ENCODE measurements at regions of chr12 and their contacts with region 1.

Region 1: DNA sequence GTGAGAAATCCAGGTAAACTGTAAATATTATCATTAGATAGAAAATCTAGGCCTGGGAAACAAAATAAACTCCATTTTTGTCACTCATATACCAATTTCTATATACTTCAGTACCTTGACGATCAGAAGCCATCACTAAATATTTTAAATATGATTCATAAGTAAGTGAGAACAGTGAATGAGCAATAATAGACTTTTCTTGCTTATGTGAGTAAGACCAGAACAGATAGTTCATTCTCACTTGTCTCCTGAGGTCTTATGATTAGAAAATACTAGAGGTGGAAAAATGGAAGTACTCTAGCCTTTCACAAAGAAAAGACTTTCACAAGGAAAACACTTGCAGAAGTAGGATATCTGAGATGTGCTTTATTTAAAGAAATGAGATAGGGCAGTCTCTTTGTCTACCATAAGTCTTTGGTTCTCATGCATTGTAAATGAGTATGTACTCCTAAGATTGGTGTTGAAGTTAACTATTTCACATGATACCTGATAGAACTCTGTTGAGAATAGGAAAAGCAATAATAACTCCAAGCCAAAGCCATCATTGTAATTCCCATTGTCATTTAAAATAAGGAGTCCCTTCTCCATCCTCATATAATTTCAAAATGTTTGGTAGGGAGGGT is 10.1 kb upstream of the SMCO3 start:
- DNase-seq: no peak
- H3K4me3 Mint-ChIP-seq: no peak overlapping the region
- H3K27ac Mint-ChIP-seq: no peak overlapping the region
- H3K4me1 Mint-ChIP-seq: peaks cover 20% of the 10 kb centered on the region
- H3K27me3 Mint-ChIP-seq: peaks cover 2% of the 10 kb centered on the region

Region 2: DNA sequence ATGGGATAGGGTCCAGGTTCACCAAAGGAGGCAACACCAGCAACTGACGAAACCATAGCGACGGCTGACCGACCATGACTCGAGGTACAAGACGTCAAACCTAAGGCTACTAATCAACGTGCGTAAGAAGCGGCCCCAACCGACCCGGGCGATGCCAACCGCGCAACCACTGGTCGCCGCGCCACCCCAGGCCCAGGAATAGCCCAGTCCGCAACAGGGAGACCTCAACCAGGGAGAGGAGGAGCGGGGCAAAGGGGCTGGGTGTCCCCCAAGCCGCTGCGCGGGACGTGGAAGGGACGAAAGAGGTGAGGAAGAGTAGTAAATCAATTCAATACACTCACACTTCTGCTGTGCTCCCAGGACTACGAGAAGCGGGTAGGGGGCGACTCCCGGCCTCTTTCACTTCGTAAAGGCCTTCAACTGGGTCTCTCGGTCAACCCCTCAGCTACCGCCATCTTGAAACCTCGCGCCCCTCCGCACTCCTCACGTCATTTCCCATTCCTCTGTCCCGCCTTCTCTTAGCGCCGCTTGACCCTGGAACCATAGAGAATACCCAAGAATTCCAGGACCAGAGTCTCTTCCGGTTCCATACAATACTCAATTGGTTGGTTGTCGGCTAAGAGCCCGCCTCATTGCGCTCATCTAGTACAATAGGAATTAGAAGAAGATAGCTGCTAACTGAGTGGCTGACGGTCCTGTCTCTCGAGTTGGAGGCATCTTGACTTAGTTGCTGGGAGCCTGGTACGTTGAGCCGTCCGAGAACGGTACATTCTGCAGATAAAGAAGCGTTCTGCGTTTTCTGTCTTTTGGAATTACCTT is 20.9 kb before region 1 on chr12 and contains the starts of genes C12orf60 and WBP11:
- CTCF ChIA-PET with region 1: no interaction called
- POLR2A ChIA-PET with region 1: no interaction called
- intact Hi-C with region 1: loop called (anchors 1 kb)
- DNase-seq: peak; percentile 93
- H3K4me3 Mint-ChIP-seq: no peak within 1 kb of the TSS
- H3K27ac Mint-ChIP-seq: no peak within 1 kb of the TSS
- H3K4me1 Mint-ChIP-seq: peaks cover 35% of the 10 kb centered on the region
- H3K27me3 Mint-ChIP-seq: no peaks in the 10 kb centered on the region
- total RNA-seq, gene C12orf60: 3.3 to 3.4 TPM
- total RNA-seq, gene WBP11: 131 to 134 TPM

Region 3: DNA sequence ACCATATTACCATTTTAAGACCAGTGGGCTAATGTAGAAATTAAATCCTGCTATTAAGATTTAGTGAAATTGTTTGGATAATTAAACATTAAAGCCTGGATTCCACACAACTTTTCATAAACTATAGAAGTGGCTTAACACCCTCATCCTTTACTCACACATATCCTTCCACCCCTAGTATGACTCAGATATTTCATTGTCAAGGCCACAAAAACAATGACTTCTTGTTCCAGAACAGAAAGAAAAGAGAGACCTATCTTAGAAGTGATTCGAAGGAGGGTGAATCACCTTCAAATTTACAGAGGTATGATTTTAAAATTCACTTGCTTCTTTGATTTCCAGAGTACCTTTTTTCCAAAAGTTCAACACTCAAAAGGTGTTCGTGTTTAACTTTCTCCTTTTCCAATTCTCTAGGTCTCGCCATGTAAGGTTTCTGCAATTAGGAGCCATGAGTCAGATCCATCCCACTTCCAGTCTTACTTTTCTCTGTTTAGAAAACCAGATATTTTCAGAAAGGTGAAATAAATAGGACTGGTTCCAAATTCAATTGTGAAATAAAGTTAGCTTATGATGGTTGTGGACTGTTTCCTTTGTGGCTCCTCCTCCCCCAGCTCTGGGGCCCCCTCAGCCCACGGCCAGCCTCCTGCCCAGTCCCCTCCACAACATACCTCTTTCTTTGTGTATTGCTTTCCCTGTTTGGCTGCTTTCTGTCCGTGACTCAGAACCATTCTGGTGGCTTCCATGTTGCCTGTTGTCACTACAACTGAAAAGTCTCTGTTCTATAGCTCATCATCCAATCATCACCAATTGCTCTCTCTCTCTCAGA is 86.2 kb after region 1 on chr12:
- CTCF ChIA-PET with region 1: no interaction called
- POLR2A ChIA-PET with region 1: no interaction called
- intact Hi-C with region 1: loop called (anchors 1 kb)
- DNase-seq: peak; percentile 67
- H3K4me3 Mint-ChIP-seq: peak overlapping the region; percentile 28
- H3K27ac Mint-ChIP-seq: peak overlapping the region; percentile 90
- H3K4me1 Mint-ChIP-seq: peaks cover 37% of the 10 kb centered on the region
- H3K27me3 Mint-ChIP-seq: no peaks in the 10 kb centered on the region

Region 4: GRCh38 chr12:14986449-14986848 is 162.3 kb after region 1 on chr12:
- CTCF ChIA-PET with region 1: no interaction called
- POLR2A ChIA-PET with region 1: no interaction called
- intact Hi-C with region 1: no loop called
- DNase-seq: no peak
- H3K4me3 Mint-ChIP-seq: no peak overlapping the region
- H3K27ac Mint-ChIP-seq: no peak overlapping the region
- H3K4me1 Mint-ChIP-seq: peaks cover 25% of the 10 kb centered on the region
- H3K27me3 Mint-ChIP-seq: no peaks in the 10 kb centered on the region

Measured in activated CD4-positive, alpha-beta memory T cell treated with anti-CD3 and anti-CD28 coated beads for 36 hours (primary cell).